ENCODE measurements at regions of chr1 and their contacts with region 1.

Region 1: GRCh38 chr1:169348383-169349036 is 19.1 kb downstream of the NME7 start:
- DNase-seq: peak in 2 of 6 donors; percentile 7 to 41
- ATAC-seq: peak; percentile 60 to 76 (median 73)
- H3K4me3 ChIP-seq: no peak overlapping the region
- H3K27ac ChIP-seq: no peak overlapping the region
- H3K4me1 ChIP-seq: no peaks in the 10 kb centered on the region
- H3K27me3 ChIP-seq: no peaks in the 10 kb centered on the region
- CTCF ChIP-seq: peak; percentile 39 to 72 (median 56)

Region 2: GRCh38 chr1:168613691-168614231 is 734.7 kb before region 1 on chr1:
- intact Hi-C with region 1: loop called in 2 of 3 experiments (anchors 5 to 10 kb)
- DNase-seq: no peak
- ATAC-seq: no peak
- H3K4me3 ChIP-seq: no peak overlapping the region
- H3K27ac ChIP-seq: no peak overlapping the region
- H3K4me1 ChIP-seq: no peaks in the 10 kb centered on the region
- H3K27me3 ChIP-seq: no peaks in the 10 kb centered on the region
- CTCF ChIP-seq: no peak